ENCODE measurements at regions of chr18 and their contacts with region 1.

Region 1: DNA sequence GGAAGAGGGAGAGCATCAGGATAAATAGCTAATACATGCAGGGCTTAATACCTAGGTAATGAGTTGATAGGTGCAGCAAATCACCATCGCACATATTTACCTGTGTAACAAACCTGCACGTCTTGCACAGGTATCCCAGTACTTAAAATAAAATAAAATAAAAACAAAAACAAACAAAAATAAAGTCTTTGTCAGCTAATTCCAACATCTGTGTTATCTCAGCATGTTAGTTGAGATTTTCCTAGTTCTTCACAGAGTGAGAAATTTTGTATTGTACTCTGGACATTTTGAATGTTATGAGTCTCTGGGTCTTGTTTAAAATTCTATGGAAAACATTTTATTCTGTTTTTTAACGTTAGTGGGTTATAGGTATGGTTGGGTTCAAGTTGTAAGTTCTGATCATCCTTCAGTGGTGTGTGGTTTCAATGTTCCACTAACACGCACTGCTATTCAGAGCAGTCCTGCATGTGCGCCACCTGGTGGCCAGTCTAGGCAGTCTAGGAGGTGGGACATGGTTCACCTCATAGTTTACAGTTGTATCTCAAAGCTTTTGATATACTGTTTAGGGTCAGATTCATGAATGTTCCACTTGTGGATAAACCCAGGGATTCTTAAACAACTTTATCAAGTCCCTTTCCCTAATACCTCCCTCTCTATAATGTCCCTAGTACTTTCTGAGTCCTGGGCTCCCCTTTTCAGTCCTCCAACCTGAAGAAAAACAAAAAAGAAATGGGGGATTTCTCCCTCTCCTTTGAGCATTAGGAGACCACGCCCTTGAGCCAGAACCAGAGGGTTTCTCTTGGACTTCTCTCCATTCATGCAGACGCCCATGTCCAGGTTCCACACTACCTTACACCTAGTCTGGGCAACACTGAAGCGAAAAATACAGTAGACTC is 213.4 kb upstream of the GATA6 start:
- DNase-seq: peak; percentile 74
- ATAC-seq: peak; percentile 76
- H3K4me3 ChIP-seq: no peak overlapping the region
- H3K4me3 Mint-ChIP-seq: no peak overlapping the region
- H3K27ac ChIP-seq: no peak overlapping the region
- H3K27ac Mint-ChIP-seq: no peak overlapping the region
- H3K4me1 ChIP-seq: no peaks in the 10 kb centered on the region
- H3K4me1 Mint-ChIP-seq: no peaks in the 10 kb centered on the region
- H3K27me3 ChIP-seq: no peaks in the 10 kb centered on the region
- H3K27me3 Mint-ChIP-seq: peaks cover 21% of the 10 kb centered on the region
- CTCF ChIP-seq: peak; percentile 94

Region 2: GRCh38 chr18:21194871-21195771 is 760.9 kb before region 1 on chr18:
- CTCF ChIA-PET with region 1: interaction called, 66 read pairs
- POLR2A ChIA-PET with region 1: no interaction called
- intact Hi-C with region 1: no loop called
- DNase-seq: peak; percentile 56
- ATAC-seq: no peak
- H3K4me3 ChIP-seq: no peak overlapping the region
- H3K4me3 Mint-ChIP-seq: no peak overlapping the region
- H3K27ac ChIP-seq: no peak overlapping the region
- H3K27ac Mint-ChIP-seq: no peak overlapping the region
- H3K4me1 ChIP-seq: no peaks in the 10 kb centered on the region
- H3K4me1 Mint-ChIP-seq: no peaks in the 10 kb centered on the region
- H3K27me3 ChIP-seq: peaks cover 0 to 3% (median 0%) of the 10 kb centered on the region in 4 experiments
- H3K27me3 Mint-ChIP-seq: peaks cover 13% of the 10 kb centered on the region
- CTCF ChIP-seq: peak; percentile 86

Region 3: DNA sequence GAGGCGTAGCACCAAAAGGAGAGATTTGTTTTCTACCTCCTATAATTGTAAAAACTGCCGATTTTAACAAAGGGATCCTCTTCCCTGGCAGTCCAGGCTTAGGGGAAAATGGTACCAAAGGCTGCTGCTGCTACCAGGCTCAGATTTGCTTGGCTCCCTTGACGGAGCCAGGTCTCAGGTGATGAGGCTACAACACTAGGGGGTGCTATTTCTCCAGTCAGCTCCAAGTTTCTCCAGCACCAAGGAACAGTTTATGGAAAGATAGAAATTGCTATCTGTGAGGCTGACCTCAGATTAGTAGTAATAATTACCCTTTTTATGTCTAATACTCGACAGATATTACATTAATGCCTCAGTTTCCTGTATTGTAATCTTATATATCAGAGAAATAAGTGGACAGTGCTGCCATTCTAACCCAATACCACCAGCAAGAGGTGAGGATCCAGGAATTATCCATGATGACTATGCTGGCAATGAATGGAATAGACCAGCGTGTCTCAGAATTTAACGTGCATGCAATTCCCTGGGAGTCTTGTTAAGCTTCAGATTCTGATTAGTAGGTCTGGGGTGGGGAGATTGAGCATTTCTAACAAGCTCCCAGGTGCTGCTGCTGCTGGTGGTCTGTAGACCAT is 466.8 kb before region 1 on chr18:
- CTCF ChIA-PET with region 1: interaction called, 26 read pairs
- POLR2A ChIA-PET with region 1: no interaction called
- intact Hi-C with region 1: no loop called
- DNase-seq: peak; percentile 43
- ATAC-seq: no peak
- H3K4me3 ChIP-seq: no peak overlapping the region
- H3K4me3 Mint-ChIP-seq: no peak overlapping the region
- H3K27ac ChIP-seq: no peak overlapping the region
- H3K27ac Mint-ChIP-seq: no peak overlapping the region
- H3K4me1 ChIP-seq: no peaks in the 10 kb centered on the region
- H3K4me1 Mint-ChIP-seq: no peaks in the 10 kb centered on the region
- H3K27me3 ChIP-seq: no peaks in the 10 kb centered on the region
- H3K27me3 Mint-ChIP-seq: peaks cover 2% of the 10 kb centered on the region
- CTCF ChIP-seq: peak; percentile 65

Region 4: DNA sequence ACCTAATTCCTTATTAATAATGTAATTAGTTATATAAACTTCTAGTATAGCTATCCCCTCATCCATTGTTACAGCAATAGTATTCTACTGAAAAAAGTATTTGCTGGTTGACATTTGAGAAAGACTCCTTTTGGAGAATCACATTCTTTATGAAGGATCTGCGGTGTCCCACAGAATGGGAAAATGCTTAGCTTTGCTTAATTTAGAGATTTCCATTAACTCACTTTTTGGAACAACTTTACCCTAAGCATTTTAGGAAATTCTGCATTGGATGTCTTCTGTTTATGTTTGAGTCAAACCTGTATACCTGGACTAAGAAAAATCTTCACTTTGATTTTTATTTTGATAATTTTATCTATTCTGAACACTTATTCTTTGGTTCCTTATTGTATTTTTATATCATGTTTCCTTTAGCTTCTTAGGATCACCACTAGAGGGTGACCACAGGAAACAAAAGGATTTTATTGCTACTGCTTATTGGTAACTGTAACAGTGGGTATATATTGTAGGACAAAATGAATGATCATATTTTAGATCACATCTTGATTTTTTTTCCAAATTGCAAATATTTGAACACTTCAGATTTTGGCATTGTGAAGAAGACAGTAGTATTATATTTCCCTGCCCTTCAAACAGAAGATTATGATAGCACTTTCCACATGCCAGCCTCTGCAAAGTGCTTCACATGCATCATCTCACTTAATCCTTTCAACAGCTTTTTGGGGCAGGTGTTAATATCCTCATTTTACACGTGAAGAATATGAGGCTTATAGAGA is 135.8 kb before region 1 on chr18:
- CTCF ChIA-PET with region 1: no interaction called
- POLR2A ChIA-PET with region 1: no interaction called
- intact Hi-C with region 1: loop called (anchors 1 kb)
- DNase-seq: no peak
- ATAC-seq: no peak
- H3K4me3 ChIP-seq: no peak overlapping the region
- H3K4me3 Mint-ChIP-seq: no peak overlapping the region
- H3K27ac ChIP-seq: no peak overlapping the region
- H3K27ac Mint-ChIP-seq: no peak overlapping the region
- H3K4me1 ChIP-seq: no peaks in the 10 kb centered on the region
- H3K4me1 Mint-ChIP-seq: no peaks in the 10 kb centered on the region
- H3K27me3 ChIP-seq: no peaks in the 10 kb centered on the region
- H3K27me3 Mint-ChIP-seq: no peaks in the 10 kb centered on the region
- CTCF ChIP-seq: peak; percentile 46

Region 5: GRCh38 chr18:22108674-22109073 is 152.7 kb after region 1 on chr18:
- CTCF ChIA-PET with region 1: no interaction called
- POLR2A ChIA-PET with region 1: no interaction called
- intact Hi-C with region 1: no loop called
- DNase-seq: no peak
- ATAC-seq: no peak
- H3K4me3 ChIP-seq: no peak overlapping the region
- H3K4me3 Mint-ChIP-seq: no peak overlapping the region
- H3K27ac ChIP-seq: no peak overlapping the region
- H3K27ac Mint-ChIP-seq: no peak overlapping the region
- H3K4me1 ChIP-seq: no peaks in the 10 kb centered on the region
- H3K4me1 Mint-ChIP-seq: no peaks in the 10 kb centered on the region
- H3K27me3 ChIP-seq: no peaks in the 10 kb centered on the region
- H3K27me3 Mint-ChIP-seq: peaks cover 7% of the 10 kb centered on the region
- CTCF ChIP-seq: no peak

Region 6: DNA sequence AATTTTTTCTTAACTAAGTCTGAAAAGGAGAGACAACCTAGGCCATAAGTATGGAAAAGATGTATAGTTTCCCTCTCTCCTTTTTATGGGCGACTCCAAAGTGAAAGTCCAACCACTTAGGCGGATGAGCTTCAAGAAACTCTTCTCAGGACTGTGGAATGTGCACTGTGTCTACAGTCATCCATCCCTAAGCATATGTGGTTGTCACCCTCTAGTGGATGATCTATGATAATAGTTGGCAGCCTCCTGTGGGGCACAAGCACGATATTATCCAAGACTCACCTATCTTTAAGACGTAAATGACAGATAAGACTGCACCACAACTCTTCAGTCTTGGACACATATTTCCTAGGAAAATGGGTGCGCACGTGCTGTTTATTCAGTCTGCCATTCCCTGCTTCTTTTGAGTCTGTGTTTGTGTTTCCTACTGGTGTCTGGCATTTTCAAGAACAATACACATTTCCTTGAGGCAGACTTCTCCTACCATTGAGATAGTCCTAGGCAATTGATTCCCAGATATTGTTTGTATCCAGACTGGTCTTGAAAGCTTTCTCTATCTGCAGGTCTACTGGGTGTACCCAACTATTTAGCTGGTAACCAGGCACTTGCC is 607.2 kb after region 1 on chr18:
- CTCF ChIA-PET with region 1: no interaction called
- POLR2A ChIA-PET with region 1: no interaction called
- intact Hi-C with region 1: no loop called
- DNase-seq: no peak
- ATAC-seq: no peak
- H3K4me3 ChIP-seq: no peak overlapping the region
- H3K4me3 Mint-ChIP-seq: no peak overlapping the region
- H3K27ac ChIP-seq: no peak overlapping the region
- H3K27ac Mint-ChIP-seq: no peak overlapping the region
- H3K4me1 ChIP-seq: peaks cover 0 to 3% of the 10 kb centered on the region in 2 donors
- H3K4me1 Mint-ChIP-seq: peaks cover 2% of the 10 kb centered on the region
- H3K27me3 ChIP-seq: peaks cover 0 to 11% (median 5%) of the 10 kb centered on the region in 4 experiments
- H3K27me3 Mint-ChIP-seq: peaks cover 22% of the 10 kb centered on the region
- CTCF ChIP-seq: no peak

Measured in B cell (primary cell).